HepG2 (cell line): ENCODE measurements at regions of chr14 and their contacts with region 1.

Region 1: GRCh38 chr14:36099619-36100018 is 76.9 kb downstream of the PTCSC3 start:
- DNase-seq: no peak
- ATAC-seq: no peak
- H3K4me3 ChIP-seq: no peak overlapping the region
- H3K27ac ChIP-seq: no peak overlapping the region
- H3K4me1 ChIP-seq: peaks cover 4% of the 10 kb centered on the region; the same call in 1 of the 2 replicates
- H3K27me3 ChIP-seq: no peaks in the 10 kb centered on the region
- CTCF ChIP-seq: no peak
- EP300 ChIP-seq: no peak
- POLR2A ChIP-seq: no peak
- RAD21 ChIP-seq: no peak

Region 2: DNA sequence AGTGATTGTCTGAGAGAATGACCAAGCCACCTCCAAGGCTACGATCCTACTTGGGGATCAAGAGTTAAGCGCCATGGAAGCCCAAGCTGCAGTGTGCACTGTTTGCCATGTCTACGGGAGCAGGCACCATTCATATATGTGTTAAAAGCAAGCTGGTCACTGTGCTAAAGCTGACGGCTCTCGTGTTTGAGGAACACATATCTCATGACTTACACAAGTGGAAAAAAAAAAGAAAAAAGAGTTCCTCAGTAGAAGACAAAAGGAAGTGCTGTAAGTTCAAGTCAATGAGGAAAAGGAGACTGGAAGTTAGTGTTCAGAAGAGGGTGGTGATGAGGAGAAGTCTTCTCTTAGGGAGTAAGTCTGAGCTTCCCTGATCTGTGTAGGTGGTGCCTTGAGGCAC is 81.8 kb after region 1 on chr14:
- CTCF ChIA-PET with region 1: no interaction called
- POLR2A ChIA-PET with region 1: no interaction called
- in situ Hi-C with region 1: no loop called
- intact Hi-C with region 1: loop called (anchors 1 kb)
- DNase-seq: no peak
- ATAC-seq: peak; percentile 48
- H3K4me3 ChIP-seq: no peak overlapping the region
- H3K27ac ChIP-seq: no peak overlapping the region
- H3K4me1 ChIP-seq: no peaks in the 10 kb centered on the region
- H3K27me3 ChIP-seq: peaks cover 0 to 17% of the 10 kb centered on the region in 2 experiments; a peak in 1 of 5 replicates
- CTCF ChIP-seq: no peak
- EP300 ChIP-seq: no peak
- POLR2A ChIP-seq: no peak
- RAD21 ChIP-seq: no peak

Region 3: GRCh38 chr14:36580856-36581831 is 481.5 kb after region 1 on chr14:
- CTCF ChIA-PET with region 1: no interaction called
- POLR2A ChIA-PET with region 1: no interaction called
- in situ Hi-C with region 1: no loop called
- intact Hi-C with region 1: no loop called
- DNase-seq: no peak
- ATAC-seq: no peak; the same call in 2 of the 3 replicates
- H3K4me3 ChIP-seq: no peak overlapping the region
- H3K27ac ChIP-seq: no peak overlapping the region
- H3K4me1 ChIP-seq: peaks cover 11% of the 10 kb centered on the region
- H3K27me3 ChIP-seq: peaks cover 2 to 4% of the 10 kb centered on the region in 2 experiments; a peak in 2 of 5 replicates
- CTCF ChIP-seq: no peak
- EP300 ChIP-seq: no peak
- POLR2A ChIP-seq: no peak
- RAD21 ChIP-seq: no peak